Tibial artery (tissue), 4 donors: ENCODE measurements at regions of chr3 and their contacts with region 1.

Region 1: GRCh38 chr3:29525254-29525881 is 244.5 kb downstream of the RBMS3 start:
- DNase-seq: peak; percentile 89 to 90
- H3K4me3 ChIP-seq: no peak overlapping the region
- H3K27ac ChIP-seq: peak overlapping the region; percentile 59 to 68
- H3K4me1 ChIP-seq: peaks cover 0 to 84% (median 27%) of the 10 kb centered on the region in 4 donors
- H3K27me3 ChIP-seq: no peaks in the 10 kb centered on the region
- CTCF ChIP-seq: no peak

Region 2: GRCh38 chr3:29280404-29281093 is 244.8 kb before region 1 on chr3 and contains the start of gene RBMS3:
- intact Hi-C with region 1: loop called (anchors 5 kb)
- DNase-seq: peak; percentile 94 to 96
- H3K4me3 ChIP-seq: peak within 1 kb of the TSS; percentile 56 to 64
- H3K27ac ChIP-seq: peak within 1 kb of the TSS; percentile 82 to 89
- H3K4me1 ChIP-seq: peaks cover 0 to 26% (median 6%) of the 10 kb centered on the region in 4 donors
- H3K27me3 ChIP-seq: no peaks in the 10 kb centered on the region
- CTCF ChIP-seq: peak; percentile 37 to 55